Naive thymus-derived CD8-positive, alpha-beta T cell (primary cell): ENCODE measurements at regions of chr2 and their contacts with region 1.

Region 1: DNA sequence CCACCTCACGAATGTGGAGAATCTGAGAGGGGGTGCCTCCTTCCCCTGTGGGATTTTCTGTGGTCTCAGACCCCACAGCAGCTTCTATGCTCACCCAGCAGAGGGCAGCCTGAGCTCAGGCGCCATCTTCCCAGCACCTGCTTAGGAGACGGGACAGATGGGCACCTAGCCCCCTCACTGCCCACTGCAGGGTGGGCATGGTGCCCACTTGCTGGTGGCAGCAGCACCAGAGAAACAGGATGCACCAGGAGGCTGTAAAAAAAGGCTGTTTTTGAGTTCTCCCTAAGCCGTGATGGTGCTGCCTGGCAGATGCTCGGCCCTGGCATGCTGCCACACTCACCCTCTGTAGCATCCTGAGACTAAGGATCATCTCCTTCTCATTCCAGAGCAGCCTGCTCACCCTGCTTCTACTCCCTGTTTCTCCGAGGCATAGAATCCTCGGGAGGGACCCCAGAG is 19.1 kb upstream of the SLC20A1 start:
- DNase-seq: peak; percentile 41 to 84 (median 64)
- ATAC-seq: peak; percentile 59 to 66
- H3K4me3 Mint-ChIP-seq: peak overlapping the region; percentile 62 to 83 (median 77)
- H3K27ac Mint-ChIP-seq: peak overlapping the region; percentile 34 to 95 (median 88)
- H3K4me1 Mint-ChIP-seq: peaks cover 19 to 76% (median 56%) of the 10 kb centered on the region in 4 donors
- H3K27me3 Mint-ChIP-seq: peaks cover 0 to 2% (median 0%) of the 10 kb centered on the region in 5 donors

Region 2: GRCh38 chr2:112645310-112646101 is 18.9 kb after region 1 on chr2 and contains the start of gene SLC20A1:
- POLR2A ChIA-PET with region 1: interaction called, 330 read pairs
- DNase-seq: peak; percentile 96 to 100 (median 99)
- ATAC-seq: peak; percentile 90
- H3K4me3 Mint-ChIP-seq: peak within 1 kb of the TSS; percentile 86 to 95 (median 92)
- H3K27ac Mint-ChIP-seq: peak within 1 kb of the TSS; percentile 59 to 95 (median 92)
- H3K4me1 Mint-ChIP-seq: peaks cover 35 to 64% (median 61%) of the 10 kb centered on the region in 4 donors
- H3K27me3 Mint-ChIP-seq: no peaks in the 10 kb centered on the region
- polyA plus RNA-seq, gene SLC20A1: 17.0 to 33.7 (median 21.2) TPM

Region 3: GRCh38 chr2:112692496-112692911 is 65.9 kb after region 1 on chr2:
- POLR2A ChIA-PET with region 1: interaction called, 22 read pairs
- DNase-seq: peak in 1 of 10 donors; percentile 29
- ATAC-seq: peak in 1 of 2 donors; percentile 45
- H3K4me3 Mint-ChIP-seq: no peak overlapping the region
- H3K27ac Mint-ChIP-seq: peak overlapping the region in 5 of 10 donors; percentile 43 to 79 (median 49)
- H3K4me1 Mint-ChIP-seq: peaks cover 4 to 28% (median 15%) of the 10 kb centered on the region in 4 donors
- H3K27me3 Mint-ChIP-seq: peaks cover 0 to 2% (median 0%) of the 10 kb centered on the region in 5 donors